Posterior vena cava (tissue), 2 donors: ENCODE measurements at regions of chrX and their contacts with region 1.

Region 1: DNA sequence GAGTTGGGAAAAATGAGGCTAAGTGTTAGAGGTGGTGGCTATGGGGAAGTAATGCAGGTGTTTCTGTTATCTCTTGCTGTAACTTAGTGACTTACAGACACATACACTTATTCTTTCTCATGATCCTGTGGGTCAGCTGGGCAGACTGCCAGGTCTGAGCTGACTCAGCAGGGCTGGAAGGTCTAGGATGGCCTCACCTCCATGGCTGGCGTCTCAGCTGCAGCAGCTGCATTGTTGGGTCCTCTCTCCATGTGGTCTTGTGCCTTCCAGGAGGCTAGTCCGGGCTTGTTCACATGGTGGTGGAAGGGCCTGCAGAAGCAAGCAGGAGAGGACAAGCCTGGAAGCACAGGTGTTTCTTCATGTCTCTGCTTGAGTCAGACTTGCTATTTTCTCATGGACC is 172.7 kb downstream of the NHS start:
- DNase-seq: no peak

Region 2: GRCh38 chrX:17374619-17375366 is 172.9 kb before region 1 on chrX and contains the start of gene NHS:
- intact Hi-C with region 1: loop called in 1 of 2 experiments (anchors 10 kb)
- DNase-seq: peak; percentile 89
- total RNA-seq, gene NHS: 11.1 to 12.2 TPM